ENCODE measurements at regions of chr20 and their contacts with region 1.

Region 1: GRCh38 chr20:47389867-47390347 is 33.4 kb upstream of the ZMYND8 start:
- DNase-seq: no peak
- ATAC-seq: no peak
- H3K4me3 ChIP-seq: no peak overlapping the region
- H3K27ac ChIP-seq: no peak overlapping the region
- H3K4me1 ChIP-seq: peaks cover 0 to 5% (median 0%) of the 10 kb centered on the region in 3 donors
- H3K27me3 ChIP-seq: no peaks in the 10 kb centered on the region
- CTCF ChIP-seq: no peak

Region 2: GRCh38 chr20:47196091-47197081 is 193.5 kb before region 1 on chr20:
- intact Hi-C with region 1: loop called in 1 of 3 experiments (anchors 10 kb)
- DNase-seq: peak; percentile 37 to 89 (median 68)
- ATAC-seq: peak; percentile 58 to 87 (median 81)
- H3K4me3 ChIP-seq: no peak overlapping the region
- H3K27ac ChIP-seq: no peak overlapping the region
- H3K4me1 ChIP-seq: no peaks in the 10 kb centered on the region
- H3K27me3 ChIP-seq: no peaks in the 10 kb centered on the region
- CTCF ChIP-seq: peak; percentile 90 to 94 (median 92)

Region 3: DNA sequence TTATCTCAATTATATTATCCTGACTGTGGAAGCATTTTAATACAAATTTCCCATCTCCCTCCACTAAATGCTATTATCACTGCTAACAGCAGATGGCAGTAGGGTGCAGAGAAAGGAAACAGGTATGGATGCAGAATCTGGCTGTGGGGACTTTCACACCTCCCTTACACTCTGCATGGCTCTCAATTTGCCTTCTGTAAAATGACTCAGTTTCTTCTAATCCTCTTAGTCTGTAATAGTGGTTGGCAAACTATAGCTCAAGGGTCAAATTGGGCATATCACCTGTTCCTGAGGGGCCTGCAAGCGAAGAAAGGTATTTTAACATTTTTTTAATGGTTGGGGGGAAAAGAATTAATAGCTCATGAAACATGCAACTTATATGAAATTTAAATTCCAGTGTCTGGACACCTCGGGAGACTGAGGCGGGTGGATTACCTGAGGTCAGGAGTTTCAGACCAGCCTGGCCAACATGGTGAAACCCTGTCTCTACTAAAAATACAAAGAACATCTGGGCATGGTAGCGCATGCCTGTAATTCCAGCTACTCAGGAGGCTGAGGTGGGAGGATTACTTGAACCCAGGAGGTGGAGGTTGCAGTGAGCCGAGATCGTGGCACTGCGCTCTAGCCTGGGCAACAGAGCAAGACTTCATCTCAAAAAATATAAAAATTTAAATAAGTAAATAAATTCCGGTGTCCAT is 116.9 kb before region 1 on chr20:
- intact Hi-C with region 1: loop called in 1 of 3 experiments (anchors 5 kb)
- DNase-seq: peak in 2 of 6 donors; percentile 34 to 44
- ATAC-seq: peak; percentile 68 to 91 (median 85)
- H3K4me3 ChIP-seq: no peak overlapping the region
- H3K27ac ChIP-seq: peak overlapping the region in 1 of 4 donors; percentile 70
- H3K4me1 ChIP-seq: peaks cover 0 to 31% (median 8%) of the 10 kb centered on the region in 3 donors
- H3K27me3 ChIP-seq: no peaks in the 10 kb centered on the region
- CTCF ChIP-seq: peak; percentile 36 to 74 (median 64)

Region 4: GRCh38 chr20:47620808-47621805 is 231.2 kb after region 1 on chr20:
- intact Hi-C with region 1: loop called in 2 of 3 experiments (anchors 10 kb)
- DNase-seq: no peak
- ATAC-seq: peak; percentile 38 to 77 (median 74)
- H3K4me3 ChIP-seq: no peak overlapping the region
- H3K27ac ChIP-seq: no peak overlapping the region
- H3K4me1 ChIP-seq: no peaks in the 10 kb centered on the region
- H3K27me3 ChIP-seq: no peaks in the 10 kb centered on the region
- CTCF ChIP-seq: peak; percentile 39 to 76 (median 66)

Region 5: DNA sequence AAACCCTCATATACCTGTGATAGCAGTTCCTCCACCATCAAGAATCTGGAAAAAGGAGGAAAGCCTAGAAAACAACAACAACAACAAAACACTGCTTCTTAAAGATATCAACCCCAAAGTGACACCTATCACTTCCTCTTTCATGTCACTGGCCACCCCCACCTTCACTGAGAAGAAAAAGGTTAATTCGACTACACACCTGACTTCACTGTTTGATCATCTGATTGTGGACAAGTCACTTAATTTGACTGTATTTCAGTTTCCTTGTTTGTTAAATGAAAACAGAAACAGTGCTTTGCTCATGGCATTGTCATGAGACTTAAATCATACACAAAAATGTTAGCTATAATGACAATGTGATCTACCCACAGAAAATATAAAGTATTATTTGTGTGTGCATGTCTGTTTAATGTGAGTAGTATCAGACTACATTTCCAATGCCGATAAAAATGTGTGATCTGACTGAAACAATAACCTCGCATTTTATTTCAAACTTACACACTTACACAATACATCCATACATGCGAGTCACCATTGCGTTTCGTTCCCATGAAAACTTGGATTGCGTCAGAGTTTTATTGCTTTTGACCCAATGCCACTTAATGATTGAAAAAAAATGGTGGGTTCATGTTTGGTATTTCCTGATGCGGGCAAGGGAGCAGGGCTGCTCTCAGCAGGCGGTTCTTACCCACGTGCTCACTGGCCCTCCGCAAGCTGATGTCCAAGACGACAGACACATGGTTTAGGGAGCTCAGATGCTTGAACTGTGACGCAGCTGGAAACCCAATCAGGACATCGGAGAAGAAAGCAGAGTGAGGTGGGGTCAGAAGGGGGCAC is 676.1 kb after region 1 on chr20:
- intact Hi-C with region 1: no loop called
- DNase-seq: no peak
- ATAC-seq: no peak
- H3K4me3 ChIP-seq: no peak overlapping the region
- H3K27ac ChIP-seq: no peak overlapping the region
- H3K4me1 ChIP-seq: no peaks in the 10 kb centered on the region
- H3K27me3 ChIP-seq: peaks cover 0 to 3% (median 0%) of the 10 kb centered on the region in 4 donors
- CTCF ChIP-seq: no peak